AG04449 (cell line): ENCODE measurements at regions of chr2 and their contacts with region 1.

Region 1: GRCh38 chr2:27281855-27282559 is at the start of gene TRIM54:
- DNase-seq: no peak
- H3K4me3 ChIP-seq: no peak within 1 kb of the TSS
- CTCF ChIP-seq: no peak

Region 2: GRCh38 chr2:27117995-27118524 is 163.9 kb before region 1 on chr2:
- CTCF ChIA-PET with region 1: interaction called, 15 read pairs
- POLR2A ChIA-PET with region 1: no interaction called
- DNase-seq: no peak
- H3K4me3 ChIP-seq: peak overlapping the region; percentile 59
- CTCF ChIP-seq: no peak

Region 3: DNA sequence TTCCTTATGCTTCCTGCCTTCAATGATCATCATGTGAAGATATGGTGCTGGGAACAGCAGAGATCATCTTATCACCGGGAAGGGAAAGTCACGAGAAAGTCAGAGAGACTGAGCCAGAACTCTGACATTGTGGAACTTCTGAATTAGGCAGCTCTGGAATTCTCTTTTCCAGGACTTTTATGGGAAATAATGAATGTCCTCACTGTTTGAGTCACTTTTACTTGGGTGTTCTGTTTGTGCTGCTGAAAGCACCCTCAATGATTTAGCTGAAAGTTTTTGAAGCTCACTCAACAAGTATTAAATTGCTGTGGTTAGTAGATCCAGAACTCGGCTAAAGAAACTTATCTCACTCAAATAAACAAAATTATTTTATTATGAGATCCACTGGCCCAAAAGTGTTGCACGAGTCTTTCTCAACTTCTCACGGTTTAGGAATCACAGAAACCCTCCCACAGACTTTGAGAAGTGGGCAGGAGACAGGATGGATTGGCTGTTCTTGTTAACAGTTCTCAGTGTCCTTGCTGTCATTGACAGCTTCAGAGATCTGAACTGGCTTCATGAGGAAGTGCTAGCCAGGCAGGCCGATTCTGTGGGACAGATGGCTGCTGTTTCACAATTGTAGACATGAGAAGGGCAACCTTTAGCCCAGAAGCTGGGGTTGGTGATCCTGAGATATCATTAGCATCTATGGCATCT is 96.5 kb before region 1 on chr2:
- CTCF ChIA-PET with region 1: interaction called, 15 read pairs
- POLR2A ChIA-PET with region 1: no interaction called
- DNase-seq: peak; percentile 75
- H3K4me3 ChIP-seq: no peak overlapping the region; the same call in 1 of the 2 replicates
- CTCF ChIP-seq: no peak

Region 4: GRCh38 chr2:27249891-27250651 is 31.9 kb before region 1 on chr2:
- CTCF ChIA-PET with region 1: interaction called, 48 read pairs
- POLR2A ChIA-PET with region 1: interaction called, 3 read pairs
- DNase-seq: no peak
- H3K4me3 ChIP-seq: no peak overlapping the region
- CTCF ChIP-seq: peak; percentile 78

Region 5: DNA sequence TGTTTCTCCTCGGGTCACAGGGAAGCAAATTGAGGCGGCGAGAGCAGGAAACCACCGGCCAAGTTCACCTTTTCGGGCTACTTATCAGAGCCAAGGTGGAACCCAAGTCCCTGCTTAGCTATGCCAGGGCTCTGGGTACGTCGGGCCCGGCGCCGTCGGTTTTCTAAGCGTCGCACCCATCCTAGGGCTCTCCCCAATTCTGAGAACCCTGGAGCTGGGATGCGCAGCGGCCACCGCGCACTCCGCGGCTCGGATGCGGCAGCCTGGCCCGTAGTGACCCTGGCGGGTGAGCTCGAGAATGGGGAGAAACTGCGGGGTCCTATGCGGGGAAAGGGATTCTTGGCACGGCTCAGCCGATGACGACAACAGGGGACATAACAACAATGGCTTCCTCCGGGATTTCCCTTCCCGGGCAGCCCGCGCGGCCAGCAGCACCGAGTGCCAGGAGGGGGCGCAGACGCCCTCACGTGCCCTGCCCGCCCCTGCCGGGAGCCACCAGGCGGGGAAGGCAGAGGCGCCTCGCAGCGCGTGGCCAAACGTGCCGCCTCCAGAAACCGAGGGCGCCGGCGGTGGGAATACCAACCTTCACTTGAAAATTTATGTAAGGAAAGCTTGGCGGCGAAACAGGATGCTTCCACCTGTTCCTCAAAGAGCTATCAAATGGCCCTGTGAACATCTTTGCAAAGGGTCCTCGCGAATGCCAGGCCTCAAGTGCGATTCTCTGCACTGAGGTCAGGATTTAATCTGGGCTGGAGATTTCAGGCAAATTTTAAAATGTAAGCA is 17.1 kb before region 1 on chr2:
- CTCF ChIA-PET with region 1: interaction called, 125 read pairs
- POLR2A ChIA-PET with region 1: no interaction called
- DNase-seq: no peak
- H3K4me3 ChIP-seq: peak overlapping the region; percentile 43
- CTCF ChIP-seq: peak; percentile 80

Region 6: GRCh38 chr2:27303093-27304025 is 21.4 kb after region 1 on chr2:
- CTCF ChIA-PET with region 1: interaction called, 116 read pairs
- POLR2A ChIA-PET with region 1: no interaction called
- DNase-seq: no peak
- H3K4me3 ChIP-seq: no peak overlapping the region
- CTCF ChIP-seq: peak; percentile 65

Region 7: GRCh38 chr2:27441958-27442919 is 160.2 kb after region 1 on chr2 and contains the start of gene KRTCAP3:
- CTCF ChIA-PET with region 1: no interaction called
- POLR2A ChIA-PET with region 1: no interaction called
- DNase-seq: no peak
- H3K4me3 ChIP-seq: no peak within 1 kb of the TSS
- CTCF ChIP-seq: no peak